Dorsolateral prefrontal cortex (tissue), 120 donors: ENCODE measurements at regions of chr5 and their contacts with region 1.

Region 1: DNA sequence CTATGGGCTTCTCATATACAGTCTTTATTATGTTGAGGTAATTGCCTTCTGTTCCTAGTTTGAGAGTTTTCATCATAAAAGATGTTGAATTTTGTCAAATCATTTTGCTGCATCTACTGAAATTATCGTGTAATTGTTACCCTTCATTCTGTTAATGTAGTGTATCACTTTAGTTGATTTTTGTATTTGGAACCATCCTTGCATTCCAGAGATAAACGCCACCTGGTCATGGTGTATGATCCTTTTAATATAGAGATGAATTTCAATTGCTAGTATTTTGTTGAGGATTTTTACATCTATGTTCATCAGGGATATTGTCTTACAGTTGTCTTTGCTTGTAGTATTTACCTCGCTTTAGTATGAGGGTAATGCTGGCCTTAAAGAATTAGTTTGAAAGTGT is 19.3 kb downstream of the MEIKIN start:
- DNase-seq: no peak
- H3K4me3 ChIP-seq: no peak overlapping the region
- H3K27ac ChIP-seq: no peak overlapping the region
- H3K27me3 ChIP-seq: no peaks in the 10 kb centered on the region
- CTCF ChIP-seq: no peak

Region 2: DNA sequence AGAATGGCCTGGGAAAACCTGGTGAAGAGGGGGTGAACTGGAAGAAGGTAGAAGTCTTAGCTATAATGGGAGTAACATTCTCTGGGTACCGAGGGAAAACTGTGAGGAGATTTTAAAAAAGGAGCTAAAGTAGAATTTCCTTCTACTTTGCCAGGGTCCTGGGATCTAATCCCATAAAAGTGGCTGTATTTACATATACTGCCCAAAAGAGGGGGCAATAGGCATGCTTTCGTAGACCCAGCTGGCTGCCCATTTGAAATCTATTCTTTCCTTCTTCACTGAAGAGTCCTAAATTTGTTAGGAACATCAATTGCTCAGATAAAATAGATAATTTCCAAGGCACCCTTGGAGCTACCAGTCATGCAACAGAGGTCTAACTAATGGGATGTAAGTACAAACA is 503.1 kb before region 1 on chr5:
- intact Hi-C with region 1: loop called in 1 of 2 experiments (anchors 5 kb)
- DNase-seq: no peak
- H3K4me3 ChIP-seq: no peak overlapping the region
- H3K27ac ChIP-seq: peak overlapping the region in 6 of 59 donors; percentile 8 to 51 (median 32)
- H3K27me3 ChIP-seq: no peaks in the 10 kb centered on the region
- CTCF ChIP-seq: peak in 55 of 56 donors; percentile 14 to 74 (median 44)

Region 3: DNA sequence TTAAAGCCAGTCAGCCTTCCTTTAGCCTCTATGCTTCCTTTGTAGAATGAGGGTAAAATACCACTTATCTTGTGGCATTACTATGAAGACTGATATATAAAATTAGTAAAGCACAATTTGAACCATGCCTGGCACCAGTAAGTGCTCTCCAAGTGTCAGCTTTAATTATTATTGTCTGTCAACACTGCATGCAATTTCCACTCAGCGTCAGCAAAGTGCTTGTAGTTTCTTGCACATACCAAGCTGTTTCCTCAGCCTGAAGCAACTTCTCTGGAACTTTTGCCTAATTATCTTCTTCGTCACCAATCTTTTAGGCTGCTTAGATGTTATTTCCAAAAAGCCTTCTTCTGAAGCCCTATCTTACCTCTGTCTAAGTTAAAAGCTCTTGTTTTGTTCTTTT is 485.0 kb before region 1 on chr5:
- intact Hi-C with region 1: no loop called
- DNase-seq: no peak
- H3K4me3 ChIP-seq: no peak overlapping the region
- H3K27ac ChIP-seq: peak overlapping the region in 2 of 59 donors; percentile 9 to 38
- H3K27me3 ChIP-seq: no peaks in the 10 kb centered on the region
- CTCF ChIP-seq: no peak

Region 4: DNA sequence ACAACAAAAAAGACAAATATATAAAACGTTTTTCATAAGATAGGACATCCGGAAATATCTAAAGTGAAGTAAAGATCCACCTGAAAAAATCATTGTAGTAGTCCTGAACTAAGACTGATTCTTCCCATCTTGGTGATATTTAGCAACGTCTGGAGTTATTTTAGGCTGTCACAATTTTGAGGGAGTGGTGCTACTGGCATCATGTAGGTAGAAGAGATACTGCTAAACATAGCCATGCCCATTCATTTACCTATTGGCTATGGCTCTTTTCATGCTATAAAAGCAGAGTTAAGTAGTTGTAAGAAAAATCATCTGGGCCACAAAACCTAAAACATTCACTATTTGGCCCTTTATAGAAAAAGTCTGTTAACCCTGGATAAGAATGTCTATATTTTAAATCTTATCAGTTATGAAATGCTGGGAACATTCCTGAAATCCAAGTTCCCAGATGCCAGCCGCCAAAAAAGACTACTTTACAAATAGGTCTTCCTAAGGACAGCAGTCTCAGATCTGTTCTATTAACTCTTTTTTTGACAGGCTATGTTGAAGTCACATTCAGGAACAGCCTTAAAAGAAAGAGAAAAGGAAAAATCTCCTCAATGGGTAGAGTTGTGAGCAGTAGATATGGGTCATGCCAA is 318.1 kb before region 1 on chr5:
- intact Hi-C with region 1: no loop called
- DNase-seq: no peak
- H3K4me3 ChIP-seq: peak overlapping the region in 1 of 59 donors; percentile 15
- H3K27ac ChIP-seq: peak overlapping the region in 40 of 59 donors; percentile 15 to 80 (median 67)
- H3K27me3 ChIP-seq: no peaks in the 10 kb centered on the region
- CTCF ChIP-seq: no peak

Region 5: GRCh38 chr5:131913603-131914002 is 12.6 kb before region 1 on chr5:
- intact Hi-C with region 1: no loop called
- DNase-seq: no peak
- H3K4me3 ChIP-seq: no peak overlapping the region
- H3K27ac ChIP-seq: no peak overlapping the region
- H3K27me3 ChIP-seq: no peaks in the 10 kb centered on the region
- CTCF ChIP-seq: no peak